ENCODE measurements at regions of chr12 and their contacts with region 1.

Region 1: DNA sequence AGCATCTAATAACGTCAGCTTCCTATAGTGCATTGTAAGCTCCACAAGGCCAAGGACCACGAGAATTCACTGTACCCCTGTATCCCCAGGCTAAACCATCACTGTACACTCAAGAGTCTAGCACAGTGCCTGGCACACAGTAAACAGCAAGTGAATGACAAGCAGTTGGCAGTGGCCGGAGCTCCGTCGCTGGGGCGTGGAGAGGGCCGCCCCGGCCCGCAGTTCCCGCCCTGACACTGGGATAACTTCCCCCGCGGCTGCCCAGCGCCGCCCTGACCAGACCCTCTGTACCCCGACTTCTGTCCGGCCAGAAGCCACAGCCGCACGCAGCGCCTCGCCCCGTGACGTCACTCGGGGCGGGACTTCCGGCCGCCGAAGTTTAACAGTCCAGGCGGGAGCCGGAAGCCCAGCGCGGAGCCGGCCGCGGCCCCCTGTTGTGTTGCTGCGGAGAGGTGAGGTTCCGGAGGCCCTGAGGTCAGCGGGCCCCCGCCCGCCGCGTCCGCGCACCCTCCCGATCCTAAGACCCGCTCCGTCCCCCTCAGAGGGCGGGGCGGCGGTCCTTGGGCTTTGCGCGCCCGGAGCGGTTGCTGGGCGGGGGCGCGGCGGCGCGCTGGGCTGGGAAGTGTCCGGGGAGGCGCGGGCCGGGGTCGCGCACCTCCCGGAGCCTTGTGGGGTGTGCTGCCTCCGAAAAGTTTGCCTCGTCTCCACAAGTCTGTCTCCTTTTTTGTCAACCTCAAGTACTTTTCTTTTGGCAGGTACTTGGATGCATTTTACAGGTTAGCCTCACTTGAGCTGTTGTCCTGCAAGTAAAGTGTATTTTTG is at the start of gene NEDD1:
- DNase-seq: peak; percentile 83
- H3K4me3 Mint-ChIP-seq: peak within 1 kb of the TSS; percentile 88
- H3K27ac Mint-ChIP-seq: peak within 1 kb of the TSS; percentile 97
- H3K4me1 Mint-ChIP-seq: peaks cover 51% of the 10 kb centered on the region
- H3K27me3 Mint-ChIP-seq: peaks cover 3% of the 10 kb centered on the region
- total RNA-seq, gene NEDD1: 61.1 and 65.3 TPM in 2 replicates

Region 2: DNA sequence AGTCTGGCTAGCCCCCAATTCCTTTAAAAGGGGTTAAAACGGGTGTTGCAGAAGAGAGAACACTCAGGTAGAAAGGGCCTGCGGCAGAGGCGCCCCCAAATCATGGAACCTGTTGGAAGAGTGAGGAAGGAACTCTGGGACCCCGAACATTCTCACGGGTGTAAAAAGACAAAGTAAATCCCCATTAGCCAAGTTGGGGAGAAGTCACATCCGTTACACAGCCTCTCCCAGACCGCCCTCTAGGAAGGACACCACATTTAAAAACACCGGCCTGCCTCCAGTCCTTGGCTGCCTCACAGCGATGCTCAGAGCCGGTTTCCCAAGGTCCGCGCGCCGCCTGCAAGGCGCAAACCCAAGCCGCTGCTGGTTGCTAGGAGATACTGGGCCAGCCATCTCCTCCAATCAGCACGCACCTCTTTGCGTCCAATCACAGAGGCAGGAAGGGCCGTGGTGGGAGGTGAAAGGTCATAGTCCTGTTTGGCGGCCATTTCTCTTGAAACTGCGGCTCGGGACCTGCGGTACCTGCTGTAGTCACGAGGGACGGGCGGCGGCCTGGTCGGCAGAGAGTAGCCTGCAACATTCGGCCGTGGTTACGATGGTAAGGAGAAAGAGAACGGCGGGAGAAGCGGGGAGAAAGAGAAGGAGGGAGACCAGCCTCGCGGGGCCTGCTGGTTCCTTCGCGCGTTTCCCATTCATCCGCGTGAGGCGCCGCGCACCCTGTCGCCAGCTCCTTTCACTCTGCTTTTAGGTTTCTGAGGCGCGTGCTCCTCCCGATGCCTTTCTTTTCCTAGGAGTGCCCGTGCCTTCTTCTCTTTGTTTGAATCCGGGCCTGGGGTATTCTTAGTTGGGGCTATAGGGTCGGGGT is 1048.3 kb before region 1 on chr12 and contains the start of gene SNRPF:
- intact Hi-C with region 1: loop called (anchors 5 kb)
- DNase-seq: peak; percentile 93
- H3K4me3 Mint-ChIP-seq: no peak within 1 kb of the TSS
- H3K27ac Mint-ChIP-seq: no peak within 1 kb of the TSS
- H3K4me1 Mint-ChIP-seq: peaks cover 12% of the 10 kb centered on the region
- H3K27me3 Mint-ChIP-seq: peaks cover 5% of the 10 kb centered on the region
- total RNA-seq, gene SNRPF: 65.6 and 70.9 TPM in 2 replicates

Region 3: GRCh38 chr12:96399919-96400797 is 506.9 kb before region 1 on chr12 and contains the start of gene CDK17:
- intact Hi-C with region 1: loop called (anchors 2 kb)
- DNase-seq: peak; percentile 83
- H3K4me3 Mint-ChIP-seq: peak within 1 kb of the TSS; percentile 93
- H3K27ac Mint-ChIP-seq: peak within 1 kb of the TSS; percentile 97
- H3K4me1 Mint-ChIP-seq: peaks cover 66% of the 10 kb centered on the region
- H3K27me3 Mint-ChIP-seq: no peaks in the 10 kb centered on the region
- total RNA-seq, gene CDK17: 32.4 and 37.1 TPM in 2 replicates

Region 4: DNA sequence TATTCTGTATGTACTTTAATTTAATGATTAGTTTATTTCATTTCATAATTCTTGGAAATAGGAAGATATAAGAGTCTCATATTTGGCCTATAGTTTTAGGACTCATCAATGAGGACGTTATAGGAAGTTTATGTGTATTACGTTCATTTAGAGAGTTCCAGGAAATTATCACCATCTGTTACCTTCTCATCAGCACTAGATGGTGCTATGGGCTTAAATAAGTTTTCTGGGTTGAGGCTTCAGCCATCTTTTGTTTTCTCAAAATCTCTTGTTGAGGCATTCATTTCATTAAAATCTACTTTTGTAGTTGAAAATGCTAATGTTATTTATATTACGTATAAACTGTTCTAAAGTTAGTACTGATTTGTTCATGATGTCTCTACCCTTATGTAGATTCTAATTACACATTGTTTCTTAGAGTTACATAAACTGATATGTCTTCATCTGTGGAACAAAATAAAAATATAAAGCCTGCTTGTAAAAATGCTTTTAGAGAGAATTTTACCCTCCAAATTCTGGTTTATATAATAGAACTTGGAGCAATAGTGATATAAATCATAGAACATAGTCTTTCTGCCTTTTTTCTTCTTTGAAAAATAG is 328.4 kb before region 1 on chr12:
- intact Hi-C with region 1: loop called (anchors 2 kb)
- DNase-seq: no peak
- H3K4me3 Mint-ChIP-seq: no peak overlapping the region
- H3K27ac Mint-ChIP-seq: no peak overlapping the region
- H3K4me1 Mint-ChIP-seq: no peaks in the 10 kb centered on the region
- H3K27me3 Mint-ChIP-seq: peaks cover 5% of the 10 kb centered on the region

Region 5: DNA sequence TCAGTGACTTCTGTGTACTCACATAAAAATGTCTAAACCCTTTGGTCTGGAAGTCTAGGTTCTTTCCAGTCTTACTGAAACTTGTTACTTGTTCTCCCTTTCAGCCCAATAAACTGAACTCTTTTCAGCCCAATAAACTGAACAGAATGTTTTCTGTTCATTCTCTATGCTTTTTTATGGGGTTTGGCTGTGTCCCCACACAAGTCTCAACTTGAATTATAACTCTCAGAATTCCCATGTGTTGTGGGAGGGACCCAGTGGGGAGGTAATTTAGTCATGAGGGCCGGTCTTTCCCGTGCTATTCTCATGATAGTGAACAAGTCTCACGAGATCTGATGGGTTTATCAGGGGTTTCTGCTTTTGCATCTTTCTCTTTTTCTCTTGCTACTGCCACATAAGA is 15.0 kb before region 1 on chr12:
- intact Hi-C with region 1: no loop called
- DNase-seq: no peak
- H3K4me3 Mint-ChIP-seq: no peak overlapping the region
- H3K27ac Mint-ChIP-seq: no peak overlapping the region
- H3K4me1 Mint-ChIP-seq: peaks cover 5% of the 10 kb centered on the region
- H3K27me3 Mint-ChIP-seq: peaks cover 15% of the 10 kb centered on the region

Region 6: DNA sequence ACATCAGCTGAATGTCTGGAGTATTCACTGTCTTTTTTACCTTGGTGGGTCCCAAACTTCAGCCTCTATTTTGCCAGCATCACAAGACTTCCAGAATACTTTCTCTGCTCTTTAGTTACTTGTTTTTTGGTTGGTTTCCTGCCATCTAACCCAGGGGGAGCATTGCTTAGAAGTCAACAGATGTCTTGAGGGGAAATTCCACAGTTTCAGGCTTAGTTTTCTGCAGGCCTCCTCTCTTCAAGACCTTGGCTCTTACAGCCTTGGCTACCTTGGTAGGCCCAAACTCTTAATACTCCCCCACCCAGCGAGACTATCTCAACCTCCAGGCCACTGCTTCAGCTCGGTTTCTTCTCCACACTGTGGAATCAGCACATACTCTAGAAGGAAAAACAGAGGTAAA is 41.7 kb after region 1 on chr12:
- intact Hi-C with region 1: loop called (anchors 5 kb)
- DNase-seq: no peak
- H3K4me3 Mint-ChIP-seq: no peak overlapping the region
- H3K27ac Mint-ChIP-seq: no peak overlapping the region
- H3K4me1 Mint-ChIP-seq: peaks cover 6% of the 10 kb centered on the region
- H3K27me3 Mint-ChIP-seq: no peaks in the 10 kb centered on the region

Region 7: GRCh38 chr12:98516184-98516873 is 1609.3 kb after region 1 on chr12:
- intact Hi-C with region 1: loop called (anchors 5 kb)
- DNase-seq: peak; percentile 83
- H3K4me3 Mint-ChIP-seq: peak overlapping the region; percentile 98
- H3K27ac Mint-ChIP-seq: peak overlapping the region; percentile 100
- H3K4me1 Mint-ChIP-seq: peaks cover 30% of the 10 kb centered on the region
- H3K27me3 Mint-ChIP-seq: no peaks in the 10 kb centered on the region